ENCODE measurements at regions of chr17 and their contacts with region 1.

Region 1: DNA sequence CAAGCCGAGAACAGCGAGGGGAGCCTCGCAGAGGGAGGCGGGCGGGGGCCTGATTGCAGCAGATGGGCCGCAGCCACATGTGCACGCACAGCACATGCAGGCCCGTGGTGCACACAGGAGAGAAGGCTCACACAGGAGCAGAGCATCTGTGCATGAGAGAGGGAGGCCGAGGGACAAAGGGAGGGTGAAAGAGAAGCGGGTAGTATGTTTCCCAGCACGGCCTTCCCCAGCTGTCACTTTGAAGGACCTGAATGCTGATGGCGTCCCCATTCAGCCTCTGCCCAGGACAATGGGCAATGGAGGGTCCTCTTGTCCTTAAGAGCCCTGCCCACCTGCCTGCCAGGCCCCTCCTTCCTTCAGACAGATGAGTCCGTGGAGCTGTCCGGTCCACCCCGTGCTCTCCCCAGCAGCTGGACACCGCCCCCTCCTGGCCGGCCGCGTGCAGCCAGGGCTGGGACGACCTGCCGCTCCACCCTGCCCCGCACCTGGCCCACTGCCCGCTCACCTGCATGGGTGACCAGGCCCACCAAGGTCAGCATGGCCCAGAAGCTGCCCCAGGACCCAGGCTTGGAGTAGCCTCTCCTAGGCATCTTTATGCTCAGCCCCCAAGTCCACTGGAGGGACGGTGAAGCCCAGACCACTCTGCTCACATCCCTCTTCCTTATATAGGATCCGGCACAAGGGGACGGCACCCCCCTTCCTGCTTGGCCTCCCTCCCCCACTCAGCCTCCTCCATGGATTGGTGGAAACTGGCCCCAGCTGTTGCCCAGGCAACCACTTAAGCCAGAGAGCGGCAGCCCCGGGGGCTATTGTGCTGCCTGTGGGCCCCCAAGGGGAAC is at the start of gene BTBD17:
- DNase-seq: peak; percentile 54
- H3K4me3 ChIP-seq: no peak within 1 kb of the TSS
- H3K27ac ChIP-seq: no peak within 1 kb of the TSS
- H3K4me1 ChIP-seq: peaks cover 5% of the 10 kb centered on the region
- H3K27me3 ChIP-seq: peaks cover 28% of the 10 kb centered on the region
- CTCF ChIP-seq: peak; percentile 59
- total RNA-seq, gene BTBD17: 0.22 TPM in 1 of 2 donors, not detected in the other

Region 2: GRCh38 chr17:74212913-74213791 is 148.3 kb before region 1 on chr17 and contains the start of gene TTYH2:
- intact Hi-C with region 1: loop called (anchors 5 kb)
- DNase-seq: peak; percentile 90
- H3K4me3 ChIP-seq: peak within 1 kb of the TSS; percentile 48
- H3K27ac ChIP-seq: peak within 1 kb of the TSS; percentile 76
- H3K4me1 ChIP-seq: peaks cover 15% of the 10 kb centered on the region
- H3K27me3 ChIP-seq: peaks cover 7% of the 10 kb centered on the region
- CTCF ChIP-seq: no peak
- total RNA-seq, gene TTYH2: 0.86 to 2.9 TPM

Region 3: DNA sequence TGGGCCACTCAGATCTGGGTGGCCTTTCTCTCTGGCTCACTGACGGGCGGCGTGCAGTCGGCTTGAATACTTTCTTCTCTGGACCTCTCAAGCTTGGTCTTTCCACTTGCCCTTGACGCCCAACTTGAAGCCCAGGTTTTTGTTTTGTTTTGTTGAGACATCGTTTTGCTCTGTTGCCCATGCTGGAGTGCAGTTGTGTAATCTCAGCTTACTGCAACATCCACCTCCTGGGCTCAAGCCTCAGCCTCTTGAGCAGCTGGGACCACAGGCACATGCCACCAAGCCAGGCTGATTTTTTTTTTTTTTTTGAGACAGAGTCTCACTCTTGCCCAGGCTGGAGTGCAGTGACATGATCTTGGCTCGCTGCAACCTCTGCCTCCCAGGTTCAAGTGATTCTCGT is 58.1 kb before region 1 on chr17:
- intact Hi-C with region 1: loop called (anchors 5 kb)
- DNase-seq: no peak
- H3K4me3 ChIP-seq: no peak overlapping the region
- H3K27ac ChIP-seq: no peak overlapping the region
- H3K4me1 ChIP-seq: no peaks in the 10 kb centered on the region
- H3K27me3 ChIP-seq: no peaks in the 10 kb centered on the region
- CTCF ChIP-seq: no peak

Measured in colonic mucosa (tissue), 4 donors.